Astrocyte of the cerebellum (primary cell): ENCODE measurements at regions of chr6 and their contacts with region 1.

Region 1: DNA sequence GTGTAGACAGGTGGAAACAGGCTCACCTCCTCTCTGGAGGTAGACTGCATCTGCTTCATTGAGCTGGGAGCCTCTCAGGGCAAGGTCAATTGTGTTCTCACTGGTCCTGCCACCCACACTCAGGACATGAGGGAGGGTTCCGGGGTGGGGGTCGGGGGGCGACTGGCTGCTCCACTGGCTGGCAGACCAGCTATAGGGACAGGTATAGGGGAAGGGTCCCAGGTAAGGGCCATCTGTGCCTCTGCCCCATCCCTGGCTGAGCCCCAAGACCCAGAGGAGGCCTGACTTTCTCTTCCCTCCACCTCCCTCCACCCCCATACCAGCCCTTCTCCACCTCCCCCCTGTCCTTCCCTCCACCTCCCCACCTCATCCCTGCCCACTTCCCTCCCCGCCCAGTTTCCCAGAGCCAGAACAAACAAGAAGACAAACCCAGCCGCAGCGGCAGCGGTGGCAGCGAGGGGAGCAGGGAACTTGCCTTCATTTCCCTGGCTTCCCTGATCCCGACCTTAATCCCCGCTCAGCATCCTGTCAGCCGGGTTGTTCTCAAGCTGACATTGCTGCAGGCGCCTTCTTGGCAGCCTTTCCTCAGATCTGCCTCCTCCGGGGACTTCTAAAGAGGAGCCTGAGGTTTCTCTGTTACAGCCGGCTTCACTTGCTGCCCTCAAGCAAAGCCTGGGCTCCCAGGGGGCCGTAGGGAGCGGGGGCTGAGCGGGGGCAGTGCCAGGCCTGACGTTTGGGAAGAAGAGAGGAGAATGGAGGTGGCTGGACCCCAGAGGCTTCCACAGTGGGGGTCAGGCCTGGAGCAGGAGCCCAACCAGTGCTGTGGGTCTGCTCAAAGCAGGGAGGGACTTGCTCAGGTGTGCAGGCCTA is 18.2 kb upstream of the FOXP4 start:
- DNase-seq: no peak
- H3K4me3 ChIP-seq: no peak overlapping the region
- CTCF ChIP-seq: no peak

Region 2: DNA sequence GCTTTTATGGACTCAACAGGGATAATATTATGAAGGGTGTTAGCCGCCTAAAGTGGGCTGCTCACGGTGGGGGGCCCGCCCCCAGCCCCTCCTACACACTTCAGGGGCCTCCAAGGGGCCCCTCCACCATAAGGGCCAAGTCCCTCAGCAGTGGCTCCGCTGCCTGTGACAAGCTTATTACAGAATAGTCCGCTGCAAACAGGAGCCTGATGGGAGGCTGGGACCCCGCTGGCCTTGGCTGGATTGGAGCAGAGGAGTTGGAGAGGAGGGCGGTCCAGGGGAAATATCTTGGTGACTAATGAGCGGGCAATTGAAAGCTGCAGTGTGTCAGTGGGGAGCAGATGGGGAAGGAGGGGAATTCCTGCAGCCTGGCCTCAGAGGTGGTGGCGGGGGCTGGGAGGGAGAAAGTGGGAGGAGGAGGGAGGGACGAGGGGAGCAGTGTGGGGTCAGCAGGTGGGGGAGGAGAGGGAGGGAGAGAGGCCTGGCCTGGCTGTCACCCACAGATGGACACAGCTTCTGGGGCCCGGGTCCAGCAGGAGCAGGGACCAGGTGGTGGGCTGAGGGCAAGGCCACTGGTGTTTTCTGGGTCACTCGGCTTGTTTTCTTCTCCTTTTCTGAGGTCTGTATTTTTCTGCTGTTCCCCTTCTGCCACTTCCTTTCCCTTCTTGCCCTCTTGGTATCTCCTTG is 39.4 kb before region 1 on chr6:
- in situ Hi-C with region 1: loop called (anchors 5 kb)
- DNase-seq: peak; percentile 75
- H3K4me3 ChIP-seq: no peak overlapping the region
- CTCF ChIP-seq: no peak

Region 3: DNA sequence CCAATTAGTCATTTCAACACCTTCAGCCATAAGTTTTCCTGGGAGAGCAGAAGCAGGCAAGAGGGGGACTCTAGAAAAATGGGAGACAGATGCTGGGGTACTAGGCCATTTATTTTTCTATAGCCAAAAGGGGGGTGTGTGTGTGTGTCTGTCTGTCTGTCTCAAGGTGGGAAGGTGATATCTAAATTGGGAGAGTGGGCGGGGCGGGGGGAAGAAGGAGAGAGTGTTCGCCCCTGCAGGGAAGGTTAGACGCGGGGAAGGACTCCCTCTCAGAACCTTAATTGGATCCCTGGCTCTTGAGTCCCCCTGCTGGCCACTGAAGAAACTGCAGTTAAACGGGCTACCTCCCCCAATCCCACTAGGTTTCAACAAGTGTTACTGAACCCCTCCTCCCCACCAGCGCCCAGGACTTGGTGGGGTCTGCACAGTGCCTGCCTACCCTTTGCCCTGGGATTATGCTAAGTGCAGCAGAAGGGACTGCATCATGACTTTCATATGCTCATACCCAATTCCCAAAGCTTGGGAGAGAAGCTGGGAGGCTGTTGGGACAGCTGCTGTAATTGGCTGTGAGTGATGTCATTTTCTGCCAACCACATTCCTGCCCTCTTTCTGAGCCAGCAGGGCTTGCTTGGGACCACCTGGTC is 64.0 kb after region 1 on chr6:
- in situ Hi-C with region 1: no loop called
- DNase-seq: peak; percentile 23
- H3K4me3 ChIP-seq: no peak overlapping the region
- CTCF ChIP-seq: peak; percentile 88